Endothelial cell of umbilical vein (primary cell): ENCODE measurements at regions of chr4 and their contacts with region 1.

Region 1: DNA sequence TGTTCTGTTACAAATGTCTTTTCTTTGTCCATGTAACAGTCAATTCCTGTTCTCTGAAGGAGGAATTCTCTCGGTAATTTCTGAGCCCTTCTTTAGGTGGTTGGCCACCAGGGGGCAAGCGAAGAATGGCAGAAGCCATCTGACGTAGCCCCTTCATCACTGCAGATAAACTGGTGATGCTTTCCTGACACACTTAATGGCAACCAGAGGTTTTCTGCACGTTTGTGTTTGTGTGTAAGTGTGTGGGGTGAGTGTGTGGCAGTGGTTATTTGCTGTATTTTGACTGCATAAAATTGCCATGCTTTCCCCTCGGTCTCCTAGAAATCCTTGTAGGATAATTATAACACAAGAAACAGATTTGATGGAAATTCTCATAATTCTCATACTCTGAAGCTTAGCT is 64.8 kb upstream of the STOX2 start:
- DNase-seq: peak; percentile 67
- H3K4me3 ChIP-seq: no peak overlapping the region
- H3K27ac ChIP-seq: no peak overlapping the region
- H3K4me1 ChIP-seq: no peaks in the 10 kb centered on the region
- H3K27me3 ChIP-seq: peaks cover 0 to 1% of the 10 kb centered on the region in 2 experiments
- CTCF ChIP-seq: peak; percentile 77 to 80
- POLR2A ChIP-seq: no peak

Region 2: GRCh38 chr4:183905081-183905592 is 64.8 kb after region 1 on chr4 and contains the start of gene STOX2:
- CTCF ChIA-PET with region 1: no interaction called
- POLR2A ChIA-PET with region 1: no interaction called
- dilution Hi-C with region 1: no loop called
- intact Hi-C with region 1: loop called (anchors 2 kb)
- DNase-seq: peak; percentile 49
- H3K4me3 ChIP-seq: peak within 1 kb of the TSS in 2 of 3 experiments; percentile 40 to 43
- H3K27ac ChIP-seq: no peak within 1 kb of the TSS
- H3K4me1 ChIP-seq: no peaks in the 10 kb centered on the region
- H3K27me3 ChIP-seq: peaks cover 19 to 23% of the 10 kb centered on the region in 2 experiments
- CTCF ChIP-seq: no peak
- POLR2A ChIP-seq: no peak
- total RNA-seq, gene STOX2: 0.02 and 0.24 TPM in 2 replicates

Region 3: GRCh38 chr4:184100297-184100885 is 260.1 kb after region 1 on chr4:
- CTCF ChIA-PET with region 1: interaction called, 8 read pairs
- POLR2A ChIA-PET with region 1: no interaction called
- dilution Hi-C with region 1: no loop called
- intact Hi-C with region 1: loop called (anchors 1 kb)
- DNase-seq: no peak
- H3K4me3 ChIP-seq: no peak overlapping the region
- H3K27ac ChIP-seq: no peak overlapping the region
- H3K4me1 ChIP-seq: no peaks in the 10 kb centered on the region
- H3K27me3 ChIP-seq: no peaks in the 10 kb centered on the region
- CTCF ChIP-seq: peak; percentile 59 to 60
- POLR2A ChIP-seq: no peak

Region 4: DNA sequence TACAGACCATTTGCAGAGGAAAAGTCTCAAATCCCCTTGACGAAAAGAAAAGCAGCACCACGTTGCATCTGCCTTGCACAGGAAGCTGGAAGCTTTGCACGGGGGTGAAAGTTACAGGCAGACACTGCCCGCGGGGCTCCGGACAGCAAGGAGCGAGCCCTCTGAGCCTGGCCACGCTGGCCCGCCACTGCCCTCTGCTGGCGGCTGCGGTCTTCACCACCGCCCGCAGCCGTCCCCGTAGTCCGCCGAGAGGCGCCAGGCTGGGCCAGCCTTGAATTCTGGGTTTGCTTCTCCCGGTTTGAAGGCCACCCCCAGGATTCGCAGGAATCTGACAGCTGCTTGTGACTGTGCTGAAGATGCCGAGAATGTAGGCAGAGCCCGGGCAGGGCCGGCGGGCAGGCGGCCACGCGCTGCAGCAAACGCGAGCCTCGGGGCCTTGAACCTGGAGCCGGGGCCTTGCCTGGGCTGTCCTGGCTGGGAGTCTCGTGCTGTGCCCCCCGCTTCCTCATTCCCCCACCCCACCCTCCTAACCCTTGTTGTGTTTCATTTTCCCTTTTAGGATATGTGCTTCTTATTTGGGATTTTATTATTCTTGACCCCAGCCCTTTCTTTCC is 328.2 kb after region 1 on chr4:
- CTCF ChIA-PET with region 1: interaction called, 62 read pairs
- POLR2A ChIA-PET with region 1: no interaction called
- dilution Hi-C with region 1: no loop called
- intact Hi-C with region 1: loop called (anchors 1 kb)
- DNase-seq: peak; percentile 53
- H3K4me3 ChIP-seq: no peak overlapping the region
- H3K27ac ChIP-seq: no peak overlapping the region
- H3K4me1 ChIP-seq: no peaks in the 10 kb centered on the region
- H3K27me3 ChIP-seq: peaks cover 0 to 3% of the 10 kb centered on the region in 2 experiments
- CTCF ChIP-seq: peak; percentile 90 to 99
- POLR2A ChIP-seq: no peak

Region 5: GRCh38 chr4:184250795-184251669 is 410.7 kb after region 1 on chr4:
- CTCF ChIA-PET with region 1: interaction called, 8 read pairs
- POLR2A ChIA-PET with region 1: no interaction called
- dilution Hi-C with region 1: no loop called
- intact Hi-C with region 1: loop called (anchors 1 kb)
- DNase-seq: peak; percentile 49
- H3K4me3 ChIP-seq: no peak overlapping the region
- H3K27ac ChIP-seq: no peak overlapping the region
- H3K4me1 ChIP-seq: no peaks in the 10 kb centered on the region
- H3K27me3 ChIP-seq: peaks cover 0 to 3% of the 10 kb centered on the region in 2 experiments
- CTCF ChIP-seq: peak; percentile 47 to 49
- POLR2A ChIP-seq: no peak